ENCODE measurements at regions of chr5 and their contacts with region 1.

Region 1: DNA sequence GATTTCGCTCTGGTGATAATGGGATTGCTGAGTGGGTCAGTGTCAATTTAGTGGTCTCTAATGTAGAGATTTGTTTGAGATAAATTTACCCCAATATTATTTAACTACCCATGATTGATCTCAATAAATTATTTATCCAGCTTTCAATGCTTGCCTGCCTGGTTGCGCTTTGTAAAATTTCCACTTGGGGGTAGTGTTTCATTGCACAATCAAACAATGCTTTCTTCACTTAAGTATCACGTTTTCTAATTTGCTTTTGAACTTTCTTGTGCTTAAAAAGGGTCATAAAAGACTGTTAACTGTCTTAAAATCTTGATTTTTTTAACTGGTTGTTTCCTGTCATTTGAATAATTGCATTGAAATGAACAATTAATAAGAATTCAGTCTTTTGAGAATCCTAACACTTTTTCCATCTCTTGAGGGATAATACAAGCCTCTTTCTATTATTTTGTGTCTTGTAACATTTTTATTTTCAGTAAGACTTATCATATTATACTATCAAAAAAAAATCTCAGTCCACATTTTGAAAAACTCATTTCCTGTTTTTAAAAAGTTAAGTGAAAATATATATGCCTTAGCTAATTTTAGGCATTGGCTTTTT is 18.7 kb downstream of the HSD17B4 start:
- DNase-seq: no peak
- ATAC-seq: no peak
- H3K4me3 ChIP-seq: no peak overlapping the region
- H3K27ac ChIP-seq: no peak overlapping the region
- H3K4me1 ChIP-seq: no peaks in the 10 kb centered on the region
- H3K27me3 ChIP-seq: no peaks in the 10 kb centered on the region
- CTCF ChIP-seq: peak; percentile 76; the same call in 1 of the 2 replicates

Region 2: DNA sequence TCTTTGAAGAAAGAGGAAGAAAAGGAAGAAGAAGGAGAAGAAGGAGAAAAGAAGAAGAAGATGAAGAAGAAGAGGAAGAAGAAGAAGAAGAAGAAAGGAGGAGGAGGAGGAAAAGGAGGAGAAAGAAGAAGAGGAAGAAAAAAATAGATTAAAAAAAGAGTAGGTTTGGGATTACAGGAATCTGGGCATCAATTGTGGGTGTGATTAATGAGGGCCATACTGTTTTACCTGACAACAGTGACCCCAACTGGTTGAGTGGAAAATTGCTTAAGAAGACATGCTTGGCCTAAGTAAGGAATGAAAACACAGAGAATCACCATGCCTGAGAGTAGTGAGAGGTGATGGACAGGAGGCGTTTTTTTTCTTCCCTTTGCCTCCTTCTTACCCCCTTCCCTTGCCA is 273.0 kb after region 1 on chr5:
- CTCF ChIA-PET with region 1: no interaction called
- POLR2A ChIA-PET with region 1: no interaction called
- in situ Hi-C with region 1: no loop called
- intact Hi-C with region 1: loop called (anchors 5 kb)
- DNase-seq: peak; percentile 13
- ATAC-seq: no peak
- H3K4me3 ChIP-seq: no peak overlapping the region
- H3K27ac ChIP-seq: no peak overlapping the region
- H3K4me1 ChIP-seq: no peaks in the 10 kb centered on the region
- H3K27me3 ChIP-seq: no peaks in the 10 kb centered on the region; the same call in 1 of the 2 replicates
- CTCF ChIP-seq: peak; percentile 47

Region 3: GRCh38 chr5:120442694-120443093 is 971.7 kb after region 1 on chr5:
- CTCF ChIA-PET with region 1: no interaction called
- POLR2A ChIA-PET with region 1: no interaction called
- in situ Hi-C with region 1: no loop called
- intact Hi-C with region 1: loop called (anchors 5 kb)
- DNase-seq: no peak
- ATAC-seq: no peak
- H3K4me3 ChIP-seq: no peak overlapping the region
- H3K27ac ChIP-seq: no peak overlapping the region
- H3K4me1 ChIP-seq: no peaks in the 10 kb centered on the region
- H3K27me3 ChIP-seq: no peaks in the 10 kb centered on the region
- CTCF ChIP-seq: no peak

Region 4: GRCh38 chr5:120457839-120458507 is 987.0 kb after region 1 on chr5:
- CTCF ChIA-PET with region 1: no interaction called
- POLR2A ChIA-PET with region 1: no interaction called
- in situ Hi-C with region 1: no loop called
- intact Hi-C with region 1: loop called (anchors 5 kb)
- DNase-seq: peak; percentile 50
- ATAC-seq: peak; percentile 96
- H3K4me3 ChIP-seq: peak overlapping the region; percentile 27 to 54
- H3K27ac ChIP-seq: no peak overlapping the region
- H3K4me1 ChIP-seq: no peaks in the 10 kb centered on the region
- H3K27me3 ChIP-seq: 0 out of 2 replicates have a peak, but pooled peaks cover 2% of the 10 kb centered on the region
- CTCF ChIP-seq: peak; percentile 86

Measured in Panc1 (cell line).